Prostate gland (tissue), 2 donors: ENCODE measurements at regions of chr17 and their contacts with region 1.

Region 1: DNA sequence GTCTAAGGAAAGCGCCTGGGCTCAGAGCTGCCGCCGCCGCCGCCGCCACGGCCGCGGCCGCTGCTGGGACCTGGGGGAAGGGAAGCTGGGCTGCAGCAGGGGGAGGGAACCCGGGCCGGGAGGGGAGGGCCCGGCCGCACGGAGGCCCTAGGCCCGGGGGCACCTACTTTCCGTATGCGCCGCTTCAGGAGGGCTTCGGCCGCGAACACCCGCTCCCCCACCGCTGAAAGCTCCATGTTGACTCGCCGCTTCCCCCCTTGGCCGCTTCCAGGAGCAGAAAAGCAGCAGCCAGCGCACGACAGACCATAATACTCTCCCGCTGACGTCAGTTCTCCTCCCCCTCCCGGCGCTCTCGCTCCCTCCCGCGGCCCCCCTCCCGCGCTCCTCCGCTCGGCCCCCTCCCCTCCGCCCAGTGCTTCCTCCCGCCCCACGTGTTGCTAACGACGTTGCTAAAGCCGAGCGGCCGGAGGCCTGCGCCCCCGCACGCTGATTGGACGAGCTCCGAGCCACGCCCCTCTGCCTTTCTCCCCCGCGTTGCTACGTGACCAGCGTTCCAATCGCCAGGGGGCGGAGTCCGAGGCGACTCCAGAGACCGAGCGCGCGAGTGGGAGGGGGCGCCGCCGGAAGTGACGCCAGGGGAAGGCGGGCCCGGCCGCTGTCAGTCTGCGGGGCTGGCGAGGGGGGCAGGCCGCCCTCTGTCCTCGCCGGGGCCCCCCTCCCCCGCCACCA is at the start of gene CBX8:
- DNase-seq: peak; percentile 99
- H3K4me3 ChIP-seq: peak within 1 kb of the TSS; percentile 61 to 70
- H3K27ac ChIP-seq: peak within 1 kb of the TSS; percentile 72 to 75
- H3K4me1 ChIP-seq: peaks cover 13% of the 10 kb centered on the region
- H3K27me3 ChIP-seq: peaks cover 41% of the 10 kb centered on the region
- CTCF ChIP-seq: peak; percentile 28 to 86 (median 58)
- POLR2A ChIP-seq: peak; percentile 30
- total RNA-seq, gene CBX8: 4.7 to 4.8 TPM

Region 2: DNA sequence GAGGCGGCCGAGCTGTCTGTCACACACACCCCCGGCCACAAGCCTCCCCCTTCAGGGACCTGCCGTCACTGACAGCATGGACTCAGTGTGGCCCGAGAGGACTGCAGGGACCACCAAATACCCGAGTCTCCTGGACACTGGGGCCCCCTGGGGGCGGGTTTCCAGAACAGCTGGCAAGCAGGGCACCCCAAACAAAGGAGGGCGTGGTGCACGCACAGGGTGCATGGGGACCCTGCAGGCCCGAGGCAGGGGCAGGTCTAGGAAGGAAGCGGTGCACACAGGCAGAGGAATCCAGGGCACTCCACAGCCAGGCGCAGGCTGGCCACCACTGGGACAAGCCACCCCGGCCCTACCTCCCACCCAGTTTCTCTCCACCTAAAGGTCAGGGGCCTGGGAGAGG is 94.9 kb before region 1 on chr17:
- intact Hi-C with region 1: no loop called
- DNase-seq: no peak
- H3K4me3 ChIP-seq: no peak overlapping the region
- H3K27ac ChIP-seq: no peak overlapping the region
- H3K4me1 ChIP-seq: no peaks in the 10 kb centered on the region
- H3K27me3 ChIP-seq: peaks cover 13% of the 10 kb centered on the region
- CTCF ChIP-seq: no peak
- POLR2A ChIP-seq: no peak

Region 3: DNA sequence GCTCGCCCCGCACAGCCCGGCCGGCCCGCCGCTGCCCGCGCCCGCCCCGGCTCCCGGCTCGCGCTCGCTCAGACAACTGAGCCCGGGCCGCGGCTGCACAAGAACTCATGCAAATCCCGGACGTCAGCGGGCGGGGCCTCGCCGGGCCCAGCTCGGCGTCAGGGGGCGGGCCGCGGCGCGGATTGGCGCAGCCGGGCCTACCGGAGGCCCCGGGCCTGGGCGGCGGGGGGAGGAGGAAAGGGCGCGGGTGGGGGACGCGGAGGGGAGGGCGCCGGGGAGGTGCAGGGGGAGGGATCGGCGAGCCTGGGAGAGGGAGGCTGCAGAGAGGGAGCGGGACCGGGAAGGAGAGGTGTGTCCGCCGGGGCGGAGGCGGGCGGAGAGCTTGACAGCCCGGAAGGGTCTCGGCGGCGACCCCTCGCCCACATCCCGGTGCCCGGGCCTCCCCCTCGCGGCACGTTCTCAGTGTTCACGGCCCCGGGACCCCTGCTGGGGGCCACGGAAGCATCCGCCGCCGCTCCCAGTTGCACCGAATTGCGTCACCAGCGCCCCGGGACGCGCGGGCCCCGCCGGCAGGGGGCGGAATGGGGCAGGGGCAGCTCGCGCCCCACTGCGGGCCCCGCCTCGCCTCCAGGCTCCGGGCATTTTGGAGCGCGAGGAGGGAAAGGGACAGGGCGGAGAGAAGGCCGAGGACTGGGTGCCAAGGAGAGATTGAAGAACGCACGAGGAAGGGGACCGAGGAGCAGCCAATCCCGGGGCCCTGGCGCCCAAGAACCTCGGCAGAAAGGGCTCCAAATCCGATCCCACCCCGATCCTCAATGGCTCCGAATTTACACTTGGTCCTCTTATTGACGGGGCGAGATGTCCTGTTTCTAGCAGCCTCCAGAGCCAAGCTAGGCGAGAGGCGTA is 42.7 kb after region 1 on chr17 and contains the start of gene CBX4:
- intact Hi-C with region 1: loop called (anchors 5 kb)
- DNase-seq: peak; percentile 96
- H3K4me3 ChIP-seq: peak within 1 kb of the TSS; percentile 76 to 86
- H3K27ac ChIP-seq: peak within 1 kb of the TSS; percentile 97
- H3K4me1 ChIP-seq: peaks cover 16% of the 10 kb centered on the region
- H3K27me3 ChIP-seq: peaks cover 17% of the 10 kb centered on the region
- CTCF ChIP-seq: peak; percentile 41 to 91 (median 78)
- POLR2A ChIP-seq: peak; percentile 79
- total RNA-seq, gene CBX4: 28.0 to 28.5 TPM